Activated naive CD4-positive, alpha-beta T cell treated with anti-CD3 and anti-CD28 coated beads, Interleukin-2, amount 10 ng/mL, durations not matched to agents 7 days and 5 days (primary cell): ENCODE measurements at regions of chr4 and their contacts with region 1.

Region 1: DNA sequence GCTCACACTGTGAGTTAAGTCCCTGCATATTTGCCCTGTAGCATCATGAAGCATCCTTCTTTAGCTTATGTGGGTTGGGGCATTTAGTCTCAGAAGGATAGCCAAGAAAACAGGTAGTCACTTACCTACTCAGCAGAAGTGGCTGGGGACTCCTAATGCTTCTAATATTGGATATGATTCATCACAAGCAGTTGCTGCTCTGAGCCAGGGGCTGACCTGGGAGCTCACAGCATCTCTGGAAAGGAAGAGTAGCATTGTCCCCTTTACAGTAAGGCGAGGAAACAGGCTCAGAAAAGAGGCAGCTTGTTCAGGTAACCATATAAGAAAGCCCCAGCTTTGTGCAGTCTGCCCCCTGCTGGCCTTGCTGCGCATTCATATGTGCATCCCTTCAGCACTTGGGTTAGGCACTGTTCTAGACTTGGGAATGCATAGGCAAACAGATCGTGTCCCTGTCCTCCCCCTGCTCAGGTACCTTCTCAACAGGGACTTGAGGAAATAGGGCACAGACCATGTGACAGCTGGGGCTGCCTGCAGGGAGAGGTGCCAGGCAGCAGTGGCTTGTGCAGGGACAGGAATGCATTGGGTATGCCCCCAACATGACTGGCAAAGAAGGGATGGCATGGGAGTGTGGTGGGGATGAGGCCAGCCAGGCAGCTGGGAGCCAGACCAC is 35.7 kb upstream of the TBC1D14 start:
- DNase-seq: peak; percentile 89
- H3K4me3 Mint-ChIP-seq: no peak overlapping the region
- H3K27ac Mint-ChIP-seq: no peak overlapping the region
- H3K4me1 Mint-ChIP-seq: peaks cover 10% of the 10 kb centered on the region
- H3K27me3 Mint-ChIP-seq: no peaks in the 10 kb centered on the region

Region 2: DNA sequence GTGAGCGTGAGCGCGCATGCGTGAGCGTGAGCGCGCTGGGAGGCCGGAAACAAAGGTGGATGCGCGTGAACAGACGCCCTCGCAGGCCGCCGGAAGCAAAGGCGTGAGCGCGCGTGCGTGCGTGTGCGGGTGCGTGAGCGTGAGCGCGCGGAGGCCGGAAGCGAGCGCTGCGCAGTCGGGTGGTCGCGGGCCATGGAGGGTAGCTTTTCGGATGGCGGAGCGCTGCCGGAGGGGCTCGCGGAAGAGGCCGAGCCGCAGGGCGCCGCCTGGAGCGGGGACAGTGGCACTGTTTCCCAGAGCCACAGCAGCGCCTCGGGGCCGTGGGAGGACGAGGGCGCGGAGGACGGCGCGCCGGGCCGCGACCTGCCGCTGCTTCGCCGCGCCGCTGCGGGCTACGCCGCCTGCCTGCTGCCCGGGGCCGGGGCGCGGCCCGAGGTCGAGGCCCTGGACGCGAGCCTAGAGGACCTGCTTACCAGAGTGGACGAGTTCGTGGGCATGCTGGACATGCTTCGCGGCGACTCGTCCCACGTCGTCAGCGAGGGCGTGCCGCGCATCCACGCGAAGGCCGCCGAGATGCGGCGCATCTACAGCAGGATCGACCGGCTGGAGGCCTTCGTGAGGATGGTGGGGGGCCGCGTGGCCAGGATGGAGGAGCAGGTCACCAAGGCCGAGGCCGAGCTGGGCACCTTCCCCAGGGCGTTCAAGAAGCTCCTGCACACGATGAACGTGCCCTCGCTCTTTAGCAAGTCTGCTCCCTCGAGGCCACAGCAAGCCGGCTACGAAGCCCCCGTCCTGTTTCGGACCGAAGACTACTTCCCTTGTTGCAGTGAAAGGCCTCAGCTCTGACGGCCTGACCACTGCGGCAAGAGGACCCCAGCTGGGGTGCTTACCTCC is 157.7 kb before region 1 on chr4 and contains the start of gene BLOC1S4:
- CTCF ChIA-PET with region 1: interaction called, 159 read pairs
- DNase-seq: peak; percentile 89
- H3K4me3 Mint-ChIP-seq: peak within 1 kb of the TSS; percentile 89
- H3K27ac Mint-ChIP-seq: peak within 1 kb of the TSS; percentile 96
- H3K4me1 Mint-ChIP-seq: peaks cover 34% of the 10 kb centered on the region
- H3K27me3 Mint-ChIP-seq: peaks cover 15% of the 10 kb centered on the region

Region 3: GRCh38 chr4:6777636-6778281 is 96.2 kb before region 1 on chr4:
- CTCF ChIA-PET with region 1: interaction called, 26 read pairs
- DNase-seq: peak; percentile 28
- H3K4me3 Mint-ChIP-seq: no peak overlapping the region
- H3K27ac Mint-ChIP-seq: peak overlapping the region; percentile 26
- H3K4me1 Mint-ChIP-seq: peaks cover 53% of the 10 kb centered on the region
- H3K27me3 Mint-ChIP-seq: peaks cover 33% of the 10 kb centered on the region

Region 4: DNA sequence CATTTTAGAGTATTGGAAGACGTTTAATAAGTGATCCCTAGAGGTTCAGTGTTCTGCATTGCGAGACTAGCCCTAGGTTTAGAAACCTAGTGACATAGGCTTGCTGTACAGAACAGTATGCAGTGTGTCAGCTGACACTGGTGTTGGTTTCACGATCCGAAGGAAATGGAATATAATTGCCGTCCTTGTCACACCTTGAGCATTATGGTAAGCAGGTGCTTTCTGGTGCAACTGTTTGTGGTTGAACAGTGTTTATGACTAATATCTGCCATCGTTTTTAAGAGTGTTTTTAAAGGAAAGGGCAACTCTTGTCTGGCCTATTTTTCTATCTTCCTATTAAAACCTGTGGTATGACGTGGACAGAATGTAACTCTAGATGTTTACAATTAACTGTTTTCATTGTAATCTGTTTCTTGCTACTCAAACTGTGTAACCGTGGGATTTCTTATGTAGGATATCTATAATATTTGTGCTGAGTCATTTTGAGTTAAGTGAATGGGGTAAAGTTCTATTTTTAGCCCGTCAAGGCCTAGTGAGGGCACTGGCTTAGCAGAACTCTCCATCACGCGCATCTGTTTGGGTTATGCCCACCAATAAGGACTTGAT is 18.1 kb before region 1 on chr4:
- CTCF ChIA-PET with region 1: interaction called, 15 read pairs
- DNase-seq: peak; percentile 23
- H3K4me3 Mint-ChIP-seq: no peak overlapping the region
- H3K27ac Mint-ChIP-seq: peak overlapping the region; percentile 2
- H3K4me1 Mint-ChIP-seq: peaks cover 17% of the 10 kb centered on the region
- H3K27me3 Mint-ChIP-seq: no peaks in the 10 kb centered on the region

Region 5: GRCh38 chr4:7067452-7068278 is 193.7 kb after region 1 on chr4 and contains the start of gene GRPEL1:
- CTCF ChIA-PET with region 1: interaction called, 15 read pairs
- DNase-seq: peak; percentile 100
- H3K4me3 Mint-ChIP-seq: peak within 1 kb of the TSS; percentile 90
- H3K27ac Mint-ChIP-seq: peak within 1 kb of the TSS; percentile 94
- H3K4me1 Mint-ChIP-seq: peaks cover 59% of the 10 kb centered on the region
- H3K27me3 Mint-ChIP-seq: peaks cover 24% of the 10 kb centered on the region